Astrocyte of the spinal cord (primary cell): ENCODE measurements at regions of chr3 and their contacts with region 1.

Region 1: DNA sequence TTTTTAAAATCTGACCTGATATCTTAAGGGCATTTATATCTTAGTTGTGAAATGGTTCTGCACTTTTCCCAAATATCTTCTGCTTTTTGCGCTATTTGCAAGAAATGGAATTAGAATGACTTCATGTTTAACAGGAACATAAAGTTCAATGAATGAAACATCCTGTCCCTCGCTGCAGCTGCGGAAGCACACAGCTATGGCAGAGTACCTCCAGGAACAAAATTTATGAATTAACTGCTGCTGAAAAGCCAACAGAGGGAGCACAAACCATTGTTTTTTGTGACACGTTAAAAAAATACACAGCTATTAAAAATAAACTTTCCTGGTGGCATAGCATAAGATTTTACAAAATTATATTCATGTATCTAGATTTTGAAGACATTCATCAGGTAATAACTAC is 404.4 kb upstream of the MDFIC2 start:
- DNase-seq: peak; percentile 56
- H3K4me3 ChIP-seq: no peak overlapping the region
- CTCF ChIP-seq: peak; percentile 51

Region 2: DNA sequence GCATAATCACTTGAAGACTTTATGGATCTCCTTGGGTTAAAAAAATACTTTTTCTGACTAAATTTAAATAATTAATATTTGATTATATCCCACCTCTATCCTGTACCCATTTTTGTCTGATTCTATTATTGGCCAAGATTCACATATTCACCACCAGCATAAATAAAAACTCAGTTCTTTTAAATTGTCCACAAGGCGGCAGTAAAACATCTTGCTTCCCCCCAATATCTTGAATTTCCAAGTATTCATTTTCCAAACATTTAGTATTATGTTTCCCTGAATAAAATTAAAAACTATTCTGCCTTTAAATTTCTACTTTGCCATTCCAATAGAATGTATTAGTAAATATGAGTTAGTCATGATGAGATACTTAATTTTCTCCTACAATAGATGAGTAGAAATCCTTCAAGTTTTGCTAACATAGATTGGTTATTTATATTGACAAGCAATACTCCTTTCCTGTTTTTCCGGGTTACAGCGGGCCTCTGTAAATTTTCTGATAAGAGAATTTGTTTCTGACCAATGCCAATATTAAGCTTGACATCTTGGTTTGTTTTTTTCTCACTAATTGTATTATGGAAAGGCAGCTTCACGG is 185.7 kb before region 1 on chr3:
- in situ Hi-C with region 1: loop called (anchors 25 kb)
- DNase-seq: peak; percentile 58
- H3K4me3 ChIP-seq: no peak overlapping the region
- CTCF ChIP-seq: peak; percentile 55

Region 3: GRCh38 chr3:70811880-70812279 is 95.0 kb after region 1 on chr3:
- in situ Hi-C with region 1: no loop called
- DNase-seq: peak; percentile 81
- H3K4me3 ChIP-seq: no peak overlapping the region
- CTCF ChIP-seq: no peak